Colonic mucosa (tissue), 4 donors: ENCODE measurements at regions of chr9 and their contacts with region 1.

Region 1: GRCh38 chr9:128580721-128581120 is 28.3 kb downstream of the SPTAN1 start:
- DNase-seq: no peak
- H3K4me3 ChIP-seq: no peak overlapping the region
- H3K27ac ChIP-seq: no peak overlapping the region
- H3K4me1 ChIP-seq: no peaks in the 10 kb centered on the region
- H3K27me3 ChIP-seq: no peaks in the 10 kb centered on the region
- CTCF ChIP-seq: no peak

Region 2: DNA sequence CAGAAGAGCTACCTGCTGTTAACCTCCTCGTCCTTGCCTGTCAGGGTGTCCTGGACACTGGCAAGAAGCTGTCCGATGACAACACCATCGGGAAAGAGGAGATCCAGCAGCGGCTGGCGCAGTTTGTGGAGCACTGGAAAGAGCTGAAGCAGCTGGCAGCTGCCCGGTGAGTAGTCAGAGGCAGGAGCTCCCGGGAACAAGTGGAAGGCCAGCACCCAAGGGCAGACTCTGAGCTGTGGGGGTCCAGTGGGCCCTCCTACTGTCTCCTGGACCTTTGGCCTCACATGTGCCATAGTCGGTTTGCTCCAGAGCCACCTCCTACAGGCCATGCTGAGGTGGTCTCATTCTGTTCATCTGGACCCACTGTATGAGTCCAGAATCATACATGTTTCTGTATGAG is 37.2 kb after region 1 on chr9:
- intact Hi-C with region 1: loop called (anchors 5 kb)
- DNase-seq: no peak
- H3K4me3 ChIP-seq: no peak overlapping the region
- H3K27ac ChIP-seq: no peak overlapping the region
- H3K4me1 ChIP-seq: no peaks in the 10 kb centered on the region
- H3K27me3 ChIP-seq: no peaks in the 10 kb centered on the region
- CTCF ChIP-seq: no peak

Region 3: GRCh38 chr9:128635283-128636023 is 54.7 kb after region 1 on chr9:
- intact Hi-C with region 1: no loop called
- DNase-seq: peak; percentile 93
- H3K4me3 ChIP-seq: no peak overlapping the region
- H3K27ac ChIP-seq: peak overlapping the region; percentile 89
- H3K4me1 ChIP-seq: peaks cover 7% of the 10 kb centered on the region
- H3K27me3 ChIP-seq: no peaks in the 10 kb centered on the region
- CTCF ChIP-seq: peak; percentile 67